ENCODE measurements at regions of chr18 and their contacts with region 1.

Region 1: GRCh38 chr18:56083097-56083521 is 495.1 kb upstream of the TCF4 start:
- DNase-seq: no peak
- ATAC-seq: no peak
- H3K4me3 ChIP-seq: no peak overlapping the region
- H3K4me3 Mint-ChIP-seq: no peak overlapping the region
- H3K27ac ChIP-seq: no peak overlapping the region
- H3K27ac Mint-ChIP-seq: no peak overlapping the region
- H3K4me1 ChIP-seq: no peaks in the 10 kb centered on the region
- H3K4me1 Mint-ChIP-seq: no peaks in the 10 kb centered on the region
- H3K27me3 ChIP-seq: no peaks in the 10 kb centered on the region
- H3K27me3 Mint-ChIP-seq: no peaks in the 10 kb centered on the region
- CTCF ChIP-seq: no peak

Region 2: DNA sequence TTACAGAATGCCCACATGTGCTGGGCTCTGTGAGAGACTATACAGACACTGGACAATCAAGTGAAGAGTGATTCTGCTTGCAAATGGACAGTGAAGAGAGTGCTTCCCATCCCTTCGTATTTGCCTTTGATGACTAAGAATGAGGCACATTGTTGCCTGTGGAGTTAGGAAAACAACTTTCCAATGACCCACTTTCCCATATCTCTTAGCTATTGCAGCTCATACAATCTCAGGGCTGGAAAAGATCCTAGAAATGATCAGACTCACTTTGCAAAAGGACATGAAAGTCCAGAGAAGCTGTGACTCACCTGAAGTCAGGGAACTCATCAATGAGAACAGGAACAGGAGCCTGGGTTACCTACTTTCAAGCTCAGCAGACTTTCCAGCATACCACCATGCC is 54.6 kb before region 1 on chr18:
- intact Hi-C with region 1: loop called (anchors 10 kb)
- DNase-seq: no peak
- ATAC-seq: no peak
- H3K4me3 ChIP-seq: no peak overlapping the region
- H3K4me3 Mint-ChIP-seq: no peak overlapping the region
- H3K27ac ChIP-seq: no peak overlapping the region
- H3K27ac Mint-ChIP-seq: no peak overlapping the region
- H3K4me1 ChIP-seq: no peaks in the 10 kb centered on the region
- H3K4me1 Mint-ChIP-seq: no peaks in the 10 kb centered on the region
- H3K27me3 ChIP-seq: no peaks in the 10 kb centered on the region
- H3K27me3 Mint-ChIP-seq: no peaks in the 10 kb centered on the region
- CTCF ChIP-seq: no peak